Motor neuron (in vitro differentiated cells): ENCODE measurements at regions of chr9 and their contacts with region 1.

Region 1: DNA sequence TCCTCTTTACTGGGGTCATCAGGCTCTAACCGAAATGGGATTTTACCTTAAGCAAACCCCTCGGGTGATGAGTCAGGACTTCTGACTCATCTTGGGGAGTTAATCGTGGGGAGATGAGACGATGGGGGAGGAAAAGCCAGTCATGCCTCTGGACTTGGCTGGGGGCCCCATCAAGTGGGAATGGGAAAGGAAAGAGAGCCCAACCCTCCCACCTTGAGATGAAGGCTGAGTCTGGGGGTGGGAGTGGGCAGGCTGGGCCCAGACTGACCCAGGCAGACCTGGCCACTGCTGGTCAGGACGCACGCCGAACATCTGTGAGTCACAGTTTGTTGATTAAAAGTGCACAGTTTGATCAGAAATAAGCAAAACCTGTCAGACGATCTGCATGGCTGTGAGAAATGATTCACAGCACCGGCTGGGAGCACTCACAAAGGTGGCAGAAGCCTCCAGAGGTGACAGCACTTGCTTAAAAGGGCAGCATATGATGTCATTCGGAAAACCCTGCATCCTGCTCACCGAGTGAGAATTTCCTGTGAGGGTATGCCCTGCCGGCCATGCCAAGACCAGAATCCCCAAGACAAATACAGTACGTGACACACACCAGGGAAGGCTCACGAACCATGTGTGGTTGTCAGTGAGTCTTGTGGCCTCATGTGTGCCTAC is 50.0 kb upstream of the SLC25A51 start:
- ATAC-seq: peak in 7 of 8 experiments; percentile 44 to 90 (median 86)
- H3K4me3 ChIP-seq: no peak overlapping the region
- H3K27ac ChIP-seq: peak overlapping the region; percentile 29 to 51
- H3K4me1 ChIP-seq: no peaks in the 10 kb centered on the region

Region 2: DNA sequence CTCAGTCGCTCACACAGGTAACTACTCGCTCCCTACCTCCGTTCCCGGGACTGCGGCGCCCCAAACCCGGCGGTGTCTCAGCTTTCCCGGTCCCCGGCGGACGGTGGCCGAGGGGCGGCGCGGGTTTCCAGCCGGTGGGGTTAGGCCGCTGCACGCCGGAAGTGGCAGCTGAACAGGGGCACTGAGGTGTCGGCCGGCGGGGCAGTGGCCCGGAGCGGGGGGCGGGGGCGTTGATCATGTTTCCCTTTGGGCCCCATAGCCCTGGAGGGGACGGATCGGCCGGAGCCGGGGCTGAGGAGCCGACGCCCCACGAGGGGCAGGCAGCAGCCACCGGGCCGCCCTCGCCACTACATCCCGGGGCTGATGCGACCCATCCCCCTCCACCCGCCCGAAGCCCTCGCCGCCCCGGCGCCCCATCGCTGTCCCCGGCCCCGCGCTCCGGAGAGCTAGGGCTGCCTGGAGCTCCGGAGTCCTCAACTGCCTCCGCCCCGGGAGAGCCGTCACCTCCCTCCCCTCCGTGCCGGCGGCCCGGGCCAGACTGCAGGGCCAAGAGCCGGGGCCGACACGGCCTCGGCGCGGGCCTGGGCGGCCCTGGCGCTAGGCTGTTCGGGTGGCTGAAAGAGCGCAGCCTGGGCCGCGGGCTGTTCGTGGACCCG is 153.1 kb before region 1 on chr9 and contains the start of gene DCAF10:
- in situ Hi-C with region 1: no loop called
- ATAC-seq: peak; percentile 78 to 96 (median 94)
- H3K4me3 ChIP-seq: peak within 1 kb of the TSS; percentile 72 to 96 (median 87)
- H3K27ac ChIP-seq: peak within 1 kb of the TSS; percentile 87 to 95
- H3K4me1 ChIP-seq: peaks cover 14 to 22% of the 10 kb centered on the region in 2 donors
- total RNA-seq, gene DCAF10: 11.7 to 34.7 (median 18.6) TPM

Region 3: GRCh38 chr9:38227061-38227540 is 273.2 kb after region 1 on chr9:
- in situ Hi-C with region 1: loop called in 1 of 9 experiments (anchors 25 kb)
- ATAC-seq: peak; percentile 83 to 93 (median 88)
- H3K4me3 ChIP-seq: peak overlapping the region in 1 of 5 donors; percentile 1
- H3K27ac ChIP-seq: peak overlapping the region in 1 of 2 donors; percentile 8
- H3K4me1 ChIP-seq: peaks cover 27 to 28% of the 10 kb centered on the region in 2 donors